GM10248 (cell line): ENCODE measurements at regions of chr5 and their contacts with region 1.

Region 1: GRCh38 chr5:132500931-132501630 is 10.5 kb upstream of the IRF1 start:
- DNase-seq: peak; percentile 84
- CTCF ChIP-seq: peak; percentile 71

Region 2: GRCh38 chr5:132369474-132370180 is 131.5 kb before region 1 on chr5 and contains the start of gene SLC22A5:
- CTCF ChIA-PET with region 1: interaction called, 27 read pairs
- POLR2A ChIA-PET with region 1: no interaction called
- DNase-seq: peak; percentile 85
- CTCF ChIP-seq: no peak

Region 3: DNA sequence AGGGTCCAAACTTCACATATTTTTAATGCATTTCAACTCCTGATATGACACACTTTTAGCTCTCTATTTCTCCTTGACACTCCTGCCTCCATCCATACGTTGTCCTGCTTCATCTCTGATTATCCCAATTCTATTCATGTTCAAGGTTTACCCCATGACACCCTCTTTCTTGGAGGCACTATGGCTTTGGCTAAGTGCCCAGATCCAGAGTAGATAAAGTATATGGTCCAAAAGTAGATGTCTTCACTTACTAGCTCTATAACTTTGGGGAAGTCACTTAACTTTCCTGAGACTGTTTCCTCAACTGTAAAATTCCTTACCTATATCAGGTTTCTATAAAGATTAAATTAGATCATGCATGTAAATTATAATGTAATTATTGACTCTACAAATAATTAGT is 95.4 kb before region 1 on chr5:
- CTCF ChIA-PET with region 1: interaction called, 19 read pairs
- POLR2A ChIA-PET with region 1: no interaction called
- DNase-seq: no peak
- CTCF ChIP-seq: no peak

Region 4: DNA sequence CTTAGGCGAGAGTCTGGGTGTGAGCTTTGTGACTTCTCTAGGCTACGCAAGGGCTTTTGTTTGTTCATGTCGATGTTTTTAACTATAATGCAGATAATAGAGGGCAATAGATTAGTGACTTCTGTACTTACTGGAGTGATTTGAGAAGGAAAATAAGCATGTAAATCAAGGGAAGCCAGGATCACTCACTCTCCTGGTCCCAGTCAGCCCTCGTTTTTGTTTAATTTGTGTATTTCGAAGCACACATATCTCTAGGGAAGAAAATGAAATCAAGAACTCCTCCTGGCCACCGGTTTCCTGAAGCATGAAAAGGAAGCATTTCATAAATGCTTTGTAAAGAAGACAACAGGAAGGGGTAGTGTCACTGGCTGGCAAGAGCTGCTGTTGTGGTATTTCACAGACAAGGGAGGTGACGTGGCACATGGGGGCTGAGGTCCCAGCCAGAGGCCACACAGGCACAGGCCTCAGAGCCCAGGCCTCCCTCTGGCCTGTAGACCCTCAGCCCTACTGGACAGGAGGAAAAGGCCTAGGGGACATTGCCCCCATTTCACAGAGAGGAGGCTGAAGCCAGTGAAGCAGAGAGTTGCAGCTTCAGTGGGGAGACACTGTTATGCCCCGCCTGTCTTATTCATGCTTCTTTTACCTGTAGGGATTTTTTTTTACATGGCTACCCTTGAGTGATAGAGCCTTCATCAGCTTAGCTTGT is 44.6 kb before region 1 on chr5:
- CTCF ChIA-PET with region 1: interaction called, 14 read pairs
- POLR2A ChIA-PET with region 1: interaction called, 4 read pairs
- DNase-seq: peak; percentile 42
- CTCF ChIP-seq: no peak

Region 5: GRCh38 chr5:132473019-132473531 is 28.0 kb before region 1 on chr5:
- CTCF ChIA-PET with region 1: interaction called, 12 read pairs
- POLR2A ChIA-PET with region 1: interaction called, 12 read pairs
- DNase-seq: peak; percentile 73
- CTCF ChIP-seq: no peak

Region 6: GRCh38 chr5:132490486-132491367 is 10.4 kb before region 1 on chr5 and contains the start of gene IRF1:
- CTCF ChIA-PET with region 1: interaction called, 62 read pairs
- POLR2A ChIA-PET with region 1: interaction called, 24 read pairs
- DNase-seq: peak; percentile 98
- CTCF ChIP-seq: peak; percentile 6

Region 7: GRCh38 chr5:132595624-132596023 is 94.5 kb after region 1 on chr5:
- CTCF ChIA-PET with region 1: no interaction called
- POLR2A ChIA-PET with region 1: no interaction called
- DNase-seq: no peak
- CTCF ChIP-seq: no peak